Activated CD4-positive, alpha-beta T cell treated with anti-CD3 and anti-CD28 coated beads for 36 hours (primary cell): ENCODE measurements at regions of chr19 and their contacts with region 1.

Region 1: DNA sequence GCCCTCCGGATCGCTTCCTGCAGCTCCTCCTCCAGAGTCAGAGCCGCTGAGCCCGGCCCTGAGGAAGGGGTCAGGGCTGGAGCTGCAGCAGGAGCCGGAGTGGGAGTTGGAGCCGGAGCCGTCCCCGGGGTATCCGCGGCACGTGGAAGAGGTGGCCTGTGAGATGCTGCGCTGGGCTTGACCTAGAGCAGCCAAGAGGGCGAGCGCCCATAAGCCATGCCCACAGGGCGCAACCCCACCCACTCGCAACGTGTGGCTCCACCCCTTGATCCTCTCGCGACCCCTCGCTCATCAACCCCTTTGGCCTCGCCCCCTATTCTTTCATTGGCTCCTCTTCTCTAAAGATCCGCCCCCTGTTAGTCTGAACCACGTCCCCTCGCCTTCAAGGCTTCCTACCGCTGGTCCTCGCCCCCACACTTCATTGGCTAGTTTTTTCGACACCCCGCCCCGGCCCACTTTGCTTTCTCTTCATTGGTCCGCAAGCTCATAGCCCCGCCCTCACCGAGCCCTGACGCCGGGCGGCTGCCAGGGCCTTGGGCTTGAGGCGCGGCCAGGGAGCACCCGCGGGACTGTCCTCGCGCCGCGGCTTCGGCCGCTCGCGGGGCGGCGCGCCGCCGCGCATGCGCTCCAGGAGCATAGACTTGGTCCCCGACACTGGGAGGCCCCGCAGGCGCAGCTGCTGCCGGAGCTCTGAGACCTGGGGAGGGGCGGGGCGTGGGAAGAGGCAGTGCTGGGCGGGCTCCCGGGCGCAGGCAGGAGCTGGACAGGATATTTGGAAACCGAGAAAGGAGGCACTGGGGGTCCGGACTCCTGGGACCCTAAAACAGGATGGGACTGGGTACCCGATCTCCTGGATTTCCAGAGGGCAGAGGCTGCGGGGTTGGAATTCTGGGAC is 5.4 kb downstream of the MAMSTR start:
- DNase-seq: peak; percentile 99
- ATAC-seq: peak; percentile 93
- H3K4me3 Mint-ChIP-seq: peak overlapping the region; percentile 83
- H3K27ac Mint-ChIP-seq: peak overlapping the region; percentile 84
- H3K4me1 Mint-ChIP-seq: peaks cover 14% of the 10 kb centered on the region
- H3K27me3 Mint-ChIP-seq: no peaks in the 10 kb centered on the region

Region 2: GRCh38 chr19:48513289-48514122 is 200.6 kb before region 1 on chr19:
- CTCF ChIA-PET with region 1: no interaction called
- POLR2A ChIA-PET with region 1: no interaction called
- intact Hi-C with region 1: loop called in 1 of 2 experiments (anchors 2 kb)
- DNase-seq: peak; percentile 86
- ATAC-seq: peak; percentile 81
- H3K4me3 Mint-ChIP-seq: no peak overlapping the region
- H3K27ac Mint-ChIP-seq: peak overlapping the region; percentile 30
- H3K4me1 Mint-ChIP-seq: peaks cover 8% of the 10 kb centered on the region
- H3K27me3 Mint-ChIP-seq: no peaks in the 10 kb centered on the region

Region 3: GRCh38 chr19:48637170-48637947 is 76.8 kb before region 1 on chr19 and contains the start of gene DBP:
- CTCF ChIA-PET with region 1: no interaction called
- POLR2A ChIA-PET with region 1: no interaction called
- intact Hi-C with region 1: loop called in 1 of 2 experiments (anchors 1 kb)
- DNase-seq: peak; percentile 98
- ATAC-seq: peak; percentile 75
- H3K4me3 Mint-ChIP-seq: peak within 1 kb of the TSS; percentile 83
- H3K27ac Mint-ChIP-seq: peak within 1 kb of the TSS; percentile 99
- H3K4me1 Mint-ChIP-seq: peaks cover 55% of the 10 kb centered on the region
- H3K27me3 Mint-ChIP-seq: no peaks in the 10 kb centered on the region
- total RNA-seq, gene DBP: 8.3 to 12.4 TPM

Region 4: GRCh38 chr19:48660854-48661731 is 53.0 kb before region 1 on chr19:
- CTCF ChIA-PET with region 1: interaction called, 4 read pairs
- POLR2A ChIA-PET with region 1: no interaction called
- intact Hi-C with region 1: loop called in 1 of 2 experiments (anchors 1 kb)
- DNase-seq: peak; percentile 88
- ATAC-seq: peak; percentile 94
- H3K4me3 Mint-ChIP-seq: peak overlapping the region; percentile 10
- H3K27ac Mint-ChIP-seq: peak overlapping the region; percentile 94
- H3K4me1 Mint-ChIP-seq: peaks cover 7% of the 10 kb centered on the region
- H3K27me3 Mint-ChIP-seq: no peaks in the 10 kb centered on the region

Region 5: DNA sequence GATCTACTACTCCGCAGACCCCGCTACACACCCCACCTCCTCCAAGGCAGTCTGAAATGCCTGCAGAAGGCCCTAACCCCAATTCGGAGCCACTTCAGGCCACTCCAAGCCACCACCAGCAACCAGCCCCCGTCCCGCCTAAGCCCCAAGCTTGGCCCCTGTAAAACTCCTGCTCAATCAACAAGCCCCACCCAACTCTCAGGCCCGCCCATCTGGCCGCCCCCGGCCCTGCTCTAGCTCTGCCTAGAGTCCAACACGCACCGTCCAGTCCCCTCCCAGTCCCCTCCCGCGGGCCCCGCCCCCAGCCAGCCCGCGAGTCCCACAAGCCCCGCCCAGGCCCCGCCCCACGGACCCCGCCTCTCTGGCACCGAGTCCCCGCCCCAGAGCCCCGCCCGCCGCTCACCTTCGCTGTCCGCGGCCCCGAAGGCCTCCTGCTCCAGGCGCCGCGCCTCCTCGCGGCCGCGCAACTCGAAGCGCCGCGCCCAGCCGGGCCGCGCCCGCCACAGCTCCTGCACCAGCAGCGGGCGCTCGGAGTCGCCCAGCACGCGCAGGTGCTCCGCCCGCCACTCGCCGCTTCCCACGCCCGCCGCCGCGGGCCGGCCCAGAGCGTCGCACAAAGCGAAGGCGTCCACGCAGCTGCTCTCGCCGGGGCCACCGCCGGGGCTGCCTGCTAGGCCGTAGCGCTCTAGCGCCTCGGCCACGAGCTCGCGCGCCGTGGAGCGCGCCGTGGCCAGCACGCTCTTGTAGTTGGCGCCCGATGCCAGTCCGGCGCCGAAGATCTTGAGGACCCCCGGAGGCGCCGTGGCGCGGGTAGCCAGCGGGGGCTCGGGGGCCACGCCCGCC is 24.7 kb after region 1 on chr19:
- CTCF ChIA-PET with region 1: interaction called, 4 read pairs
- POLR2A ChIA-PET with region 1: no interaction called
- intact Hi-C with region 1: loop called in 1 of 2 experiments (anchors 1 kb)
- DNase-seq: peak; percentile 99
- ATAC-seq: peak; percentile 96
- H3K4me3 Mint-ChIP-seq: peak overlapping the region; percentile 51
- H3K27ac Mint-ChIP-seq: peak overlapping the region; percentile 51
- H3K4me1 Mint-ChIP-seq: peaks cover 17% of the 10 kb centered on the region
- H3K27me3 Mint-ChIP-seq: peaks cover 3% of the 10 kb centered on the region

Region 6: DNA sequence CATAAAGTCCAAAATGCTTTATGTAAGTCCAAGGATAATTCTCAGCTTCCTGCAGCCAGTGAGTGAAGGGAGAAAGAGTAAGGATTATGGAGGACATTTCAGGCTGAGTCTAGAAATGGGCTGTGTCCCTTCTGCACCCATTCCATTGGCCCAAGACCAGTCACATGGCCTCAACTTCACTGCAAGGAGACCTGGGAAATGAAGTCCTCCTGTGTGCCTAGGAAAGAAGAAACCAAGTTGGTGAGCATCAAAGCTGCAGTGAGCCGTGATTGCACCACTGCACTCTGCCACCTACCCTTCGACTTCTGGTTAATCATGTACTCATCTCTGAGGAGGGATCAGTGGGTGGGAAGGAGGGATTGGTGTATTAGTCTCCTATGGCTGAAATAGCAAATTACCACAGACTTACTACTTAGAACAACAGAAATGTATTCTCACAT is 617.5 kb after region 1 on chr19:
- CTCF ChIA-PET with region 1: no interaction called
- POLR2A ChIA-PET with region 1: no interaction called
- intact Hi-C with region 1: loop called in 1 of 2 experiments (anchors 5 kb)
- DNase-seq: peak; percentile 80
- ATAC-seq: peak; percentile 80
- H3K4me3 Mint-ChIP-seq: peak overlapping the region; percentile 33
- H3K27ac Mint-ChIP-seq: peak overlapping the region; percentile 75
- H3K4me1 Mint-ChIP-seq: peaks cover 81% of the 10 kb centered on the region
- H3K27me3 Mint-ChIP-seq: no peaks in the 10 kb centered on the region